Gastrocnemius medialis (tissue), 4 donors: ENCODE measurements at regions of chr6 and their contacts with region 1.

Region 1: DNA sequence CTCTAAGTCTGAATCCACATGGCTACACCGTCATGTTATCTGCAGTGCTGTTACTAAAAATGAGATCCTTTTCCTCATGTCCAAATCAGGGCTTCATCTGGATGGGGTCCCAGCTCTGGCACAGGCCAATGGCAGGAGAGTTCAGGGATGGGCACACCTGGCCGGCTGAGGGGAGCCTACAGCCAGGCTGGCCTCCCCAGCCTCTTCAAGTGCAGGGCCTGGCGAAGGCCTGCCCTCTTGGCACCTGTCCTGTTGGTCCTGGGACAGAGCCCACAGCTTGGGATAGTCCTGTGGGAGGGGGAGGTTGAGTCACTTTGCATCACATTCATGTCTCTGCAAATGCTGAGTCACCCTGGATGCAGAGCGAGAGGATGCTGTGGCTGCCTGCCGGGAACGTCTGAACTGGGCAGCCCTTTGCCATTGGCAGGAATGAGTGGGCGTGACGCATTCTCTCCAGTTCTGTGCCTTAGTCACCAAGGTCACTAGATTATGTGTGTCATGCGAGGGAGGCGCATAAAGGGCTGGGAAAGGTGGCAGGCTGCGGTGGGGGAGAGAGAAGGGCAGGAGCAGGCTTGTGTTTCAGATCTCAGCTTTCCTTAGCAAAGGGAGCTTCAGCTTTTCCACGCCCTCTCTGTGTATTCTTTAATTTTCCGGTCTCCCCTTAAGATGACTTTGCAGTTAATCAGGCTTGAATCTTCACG is 223.2 kb upstream of the ECI2 start:
- DNase-seq: peak; percentile 96 to 99
- ATAC-seq: peak; percentile 91 to 96
- H3K4me3 ChIP-seq: peak overlapping the region in 3 of 4 donors; percentile 14 to 26 (median 20)
- H3K27ac ChIP-seq: peak overlapping the region; percentile 93 to 99 (median 94)
- H3K4me1 ChIP-seq: peaks cover 8 to 13% of the 10 kb centered on the region in 2 donors
- H3K27me3 ChIP-seq: no peaks in the 10 kb centered on the region
- CTCF ChIP-seq: no peak
- POLR2A ChIP-seq: peak; percentile 46 to 84

Region 2: GRCh38 chr6:4336778-4337442 is 21.7 kb before region 1 on chr6:
- in situ Hi-C with region 1: no loop called
- intact Hi-C with region 1: no loop called
- DNase-seq: no peak
- ATAC-seq: no peak
- H3K4me3 ChIP-seq: no peak overlapping the region
- H3K27ac ChIP-seq: no peak overlapping the region
- H3K4me1 ChIP-seq: no peaks in the 10 kb centered on the region
- H3K27me3 ChIP-seq: no peaks in the 10 kb centered on the region
- CTCF ChIP-seq: no peak
- POLR2A ChIP-seq: no peak

Region 3: DNA sequence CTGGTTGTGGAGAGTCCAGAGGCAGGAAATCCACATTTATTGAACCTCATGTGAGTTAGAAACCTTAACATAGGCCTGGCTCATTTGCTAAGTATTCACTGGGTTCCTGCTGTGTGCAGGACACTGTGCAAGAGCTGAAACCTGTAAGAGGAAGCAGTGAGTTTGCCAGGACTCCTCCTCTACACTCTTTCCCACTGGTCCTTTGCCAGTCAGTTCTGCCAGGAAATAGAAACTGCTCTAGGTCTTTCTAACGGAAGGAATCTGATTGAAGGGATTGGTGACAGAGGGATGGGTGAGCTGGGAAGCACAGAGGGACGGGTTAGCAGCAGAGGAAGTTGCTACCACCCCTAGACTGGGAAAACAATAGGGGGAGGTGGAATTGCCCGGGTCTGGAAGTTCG is 11.1 kb after region 1 on chr6:
- in situ Hi-C with region 1: no loop called
- intact Hi-C with region 1: loop called (anchors 1 kb)
- DNase-seq: peak; percentile 48 to 69
- ATAC-seq: peak; percentile 69 to 72
- H3K4me3 ChIP-seq: no peak overlapping the region
- H3K27ac ChIP-seq: peak overlapping the region; percentile 82 to 87 (median 85)
- H3K4me1 ChIP-seq: peaks cover 35 to 47% of the 10 kb centered on the region in 2 donors
- H3K27me3 ChIP-seq: no peaks in the 10 kb centered on the region
- CTCF ChIP-seq: no peak
- POLR2A ChIP-seq: no peak